Activated CD4-positive, alpha-beta T cell treated with anti-CD3 and anti-CD28 coated beads, Interleukin-2, amount 10 ng/mL, durations not matched to agents 24 days and 14 days (primary cell): ENCODE measurements at regions of chr14 and their contacts with region 1.

Region 1: DNA sequence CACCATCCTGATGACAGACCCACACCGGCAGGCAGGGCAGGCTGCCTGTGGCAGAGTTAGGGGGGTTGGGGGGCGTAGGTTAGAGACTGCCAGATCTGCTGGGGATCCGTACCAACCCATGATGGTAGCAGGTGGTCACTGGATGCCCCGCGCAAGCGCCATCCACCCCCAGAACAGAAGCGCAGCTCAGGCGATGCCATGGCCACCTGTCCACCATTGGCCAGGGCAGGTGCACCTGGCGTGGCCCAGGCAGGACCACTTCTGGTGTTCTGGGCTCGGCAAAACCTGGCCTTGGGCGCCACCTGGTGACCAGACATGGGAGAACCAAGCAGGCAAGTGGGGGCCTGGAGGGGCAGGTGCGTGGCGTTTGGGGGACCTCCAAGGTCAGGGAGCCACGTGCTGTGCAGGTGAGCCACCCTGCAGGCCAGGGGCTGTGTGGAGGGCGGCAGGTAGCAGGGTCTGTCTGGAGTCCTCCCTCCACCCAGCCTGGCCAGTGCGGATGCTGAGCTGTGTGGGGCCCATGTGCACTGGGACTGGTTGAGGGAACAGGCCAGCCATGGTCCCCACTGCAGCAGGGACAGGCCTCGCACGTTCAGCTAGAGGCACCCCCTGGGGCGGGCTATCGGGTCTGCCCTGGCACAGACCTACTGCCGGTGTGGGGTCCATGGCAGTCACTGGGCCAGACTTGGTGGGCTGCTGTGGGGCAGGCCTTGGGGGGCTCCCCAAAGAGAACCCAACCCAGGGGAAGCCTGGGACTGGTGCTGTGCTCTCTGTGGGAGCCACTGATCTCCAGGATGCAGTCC is 15.6 kb downstream of the BAG5 start:
- DNase-seq: peak; percentile 93
- H3K4me3 Mint-ChIP-seq: no peak overlapping the region
- H3K27ac Mint-ChIP-seq: no peak overlapping the region
- H3K4me1 Mint-ChIP-seq: no peaks in the 10 kb centered on the region
- H3K27me3 Mint-ChIP-seq: no peaks in the 10 kb centered on the region

Region 2: DNA sequence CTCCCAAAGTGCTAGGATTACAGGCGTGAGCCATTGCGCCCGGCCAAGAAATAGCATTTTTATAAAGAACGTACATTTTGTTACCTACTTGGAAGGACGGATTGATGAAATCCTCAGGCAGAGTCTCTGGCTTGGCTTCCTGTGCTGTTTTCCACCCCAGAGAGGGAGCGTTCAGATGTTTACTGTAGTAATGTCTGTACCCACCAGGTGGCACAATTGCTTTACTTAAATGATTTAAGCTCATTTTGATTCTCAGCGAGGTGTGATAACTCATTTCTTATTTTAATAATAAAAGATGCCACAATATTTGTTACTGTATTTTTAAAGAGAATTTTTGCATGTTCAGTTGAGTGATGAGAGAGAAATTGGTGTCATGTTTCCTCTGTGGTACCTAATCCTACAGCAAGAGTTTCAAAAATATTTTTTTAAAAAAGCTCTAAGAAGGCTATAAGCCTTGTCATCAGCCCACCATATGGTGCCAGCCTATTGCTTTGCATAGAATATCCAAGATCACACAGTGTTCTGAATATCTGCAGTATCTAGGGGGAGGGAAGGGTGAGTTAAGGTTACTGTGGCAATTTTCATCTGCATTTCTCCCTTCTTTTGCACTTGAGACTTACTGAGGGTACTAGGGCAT is 852.2 kb before region 1 on chr14:
- intact Hi-C with region 1: no loop called
- DNase-seq: peak; percentile 89
- H3K4me3 Mint-ChIP-seq: no peak overlapping the region
- H3K27ac Mint-ChIP-seq: no peak overlapping the region
- H3K4me1 Mint-ChIP-seq: peaks cover 17% of the 10 kb centered on the region
- H3K27me3 Mint-ChIP-seq: no peaks in the 10 kb centered on the region

Region 3: GRCh38 chr14:103500148-103500990 is 46.5 kb before region 1 on chr14:
- intact Hi-C with region 1: loop called (anchors 1 kb)
- DNase-seq: peak; percentile 92
- H3K4me3 Mint-ChIP-seq: no peak overlapping the region
- H3K27ac Mint-ChIP-seq: no peak overlapping the region
- H3K4me1 Mint-ChIP-seq: peaks cover 10% of the 10 kb centered on the region
- H3K27me3 Mint-ChIP-seq: no peaks in the 10 kb centered on the region

Region 4: GRCh38 chr14:103518422-103519042 is 28.3 kb before region 1 on chr14:
- intact Hi-C with region 1: loop called (anchors 1 kb)
- DNase-seq: peak; percentile 88
- H3K4me3 Mint-ChIP-seq: no peak overlapping the region
- H3K27ac Mint-ChIP-seq: no peak overlapping the region
- H3K4me1 Mint-ChIP-seq: peaks cover 7% of the 10 kb centered on the region
- H3K27me3 Mint-ChIP-seq: peaks cover 7% of the 10 kb centered on the region